BJ (cell line): ENCODE measurements at regions of chr10 and their contacts with region 1.

Region 1: GRCh38 chr10:79155301-79156081 is 86.7 kb downstream of the ZMIZ1 start:
- DNase-seq: no peak
- H3K4me3 ChIP-seq: no peak overlapping the region
- H3K27me3 ChIP-seq: no peaks in the 10 kb centered on the region
- CTCF ChIP-seq: no peak

Region 2: DNA sequence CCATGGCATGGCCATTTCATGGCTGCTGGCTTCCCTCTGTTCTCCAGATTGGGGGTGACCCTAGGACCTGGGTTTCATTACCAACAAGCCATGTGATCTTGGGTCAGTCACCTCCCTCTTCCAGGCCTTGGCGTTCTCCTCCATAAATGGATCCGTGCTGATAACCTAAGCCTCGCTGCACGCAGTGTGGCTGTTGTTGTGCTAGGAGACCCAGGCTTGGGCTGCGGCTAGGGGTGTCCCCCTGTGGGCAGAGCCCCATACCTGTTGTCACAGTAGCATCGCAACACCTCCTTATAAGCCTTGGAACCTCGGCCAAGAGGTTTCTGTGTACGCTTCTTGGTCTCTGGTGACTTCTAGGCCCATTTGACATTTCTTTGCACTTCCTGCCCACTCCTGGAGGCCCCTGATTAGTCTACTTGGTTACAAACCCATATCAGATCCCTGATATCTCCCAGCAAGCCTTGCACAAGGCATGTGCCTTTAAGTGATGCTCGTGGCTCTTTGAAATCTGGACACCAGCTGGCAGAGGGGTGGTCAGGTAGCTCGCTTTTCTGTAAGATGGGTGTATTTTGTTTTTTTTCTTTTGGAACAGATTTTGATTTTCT is 63.1 kb before region 1 on chr10:
- CTCF ChIA-PET with region 1: no interaction called
- POLR2A ChIA-PET with region 1: interaction called, 11 read pairs
- DNase-seq: no peak
- H3K4me3 ChIP-seq: no peak overlapping the region
- H3K27me3 ChIP-seq: no peaks in the 10 kb centered on the region
- CTCF ChIP-seq: no peak